Activated CD4-positive, alpha-beta memory T cell treated with anti-CD3 and anti-CD28 coated beads for 36 hours (primary cell): ENCODE measurements at regions of chr10 and their contacts with region 1.

Region 1: DNA sequence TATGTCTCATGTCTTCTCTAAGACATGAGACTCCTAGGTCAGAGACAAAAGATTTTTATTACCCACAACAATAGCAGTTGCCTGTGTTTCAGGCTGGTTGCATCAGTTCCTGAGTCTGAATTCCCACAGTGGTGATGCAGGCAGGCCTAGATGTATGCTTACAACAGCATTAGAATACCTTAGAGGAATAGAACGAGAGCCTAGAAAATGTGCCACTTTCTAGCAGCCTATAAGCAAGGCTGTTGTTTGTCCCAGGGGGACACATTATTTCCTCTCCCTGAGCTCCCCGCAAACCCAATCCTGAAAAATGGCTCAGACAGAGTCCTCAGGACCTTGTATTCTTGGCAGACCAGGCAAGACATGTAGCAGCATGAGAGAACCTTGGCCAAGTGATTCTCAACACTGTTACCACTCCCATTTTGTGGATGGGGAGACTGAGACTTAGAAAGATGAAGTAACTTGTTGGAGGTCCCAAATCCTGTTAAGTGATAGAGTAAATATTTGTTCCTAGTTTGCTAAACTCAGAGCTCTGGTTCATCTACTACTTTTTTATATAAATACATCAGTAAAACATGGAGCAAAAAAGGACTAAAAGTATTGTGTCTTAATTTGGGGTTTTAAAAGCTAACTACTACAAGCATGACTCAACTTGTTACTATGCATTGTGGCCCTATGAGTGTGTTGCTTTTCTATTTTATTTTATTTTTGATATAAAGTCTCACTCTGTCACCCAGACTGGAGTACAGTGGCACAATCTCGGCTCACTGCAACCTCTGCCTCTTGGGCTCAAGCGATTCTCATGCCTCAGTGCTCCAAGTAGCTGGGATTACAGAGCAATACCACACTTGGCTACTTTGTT is 14.2 kb downstream of the VTI1A start:
- DNase-seq: peak; percentile 77
- H3K4me3 Mint-ChIP-seq: no peak overlapping the region
- H3K27ac Mint-ChIP-seq: peak overlapping the region; percentile 94
- H3K4me1 Mint-ChIP-seq: peaks cover 24% of the 10 kb centered on the region
- H3K27me3 Mint-ChIP-seq: no peaks in the 10 kb centered on the region

Region 2: DNA sequence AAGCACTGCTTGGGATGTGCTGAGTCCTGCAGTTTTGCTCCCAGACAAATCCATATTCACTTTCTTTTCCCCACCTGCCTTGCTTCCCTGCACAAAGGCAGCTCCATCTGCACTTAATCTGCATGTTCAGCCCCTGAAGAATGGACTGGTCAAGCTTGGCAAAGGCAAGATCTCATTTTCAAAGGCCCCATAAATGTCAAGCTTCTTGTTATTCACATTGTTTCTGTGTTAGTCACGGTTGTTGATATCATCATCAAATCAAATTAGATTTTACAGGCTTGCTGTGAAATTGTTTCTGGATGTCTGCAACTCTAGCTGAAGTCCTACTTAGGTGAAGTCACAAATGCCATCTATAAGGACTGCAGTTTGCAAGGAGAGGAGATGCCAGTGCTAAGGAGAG is 368.8 kb before region 1 on chr10:
- CTCF ChIA-PET with region 1: no interaction called
- POLR2A ChIA-PET with region 1: no interaction called
- intact Hi-C with region 1: no loop called
- DNase-seq: no peak
- H3K4me3 Mint-ChIP-seq: no peak overlapping the region
- H3K27ac Mint-ChIP-seq: no peak overlapping the region
- H3K4me1 Mint-ChIP-seq: no peaks in the 10 kb centered on the region
- H3K27me3 Mint-ChIP-seq: peaks cover 14% of the 10 kb centered on the region

Region 3: DNA sequence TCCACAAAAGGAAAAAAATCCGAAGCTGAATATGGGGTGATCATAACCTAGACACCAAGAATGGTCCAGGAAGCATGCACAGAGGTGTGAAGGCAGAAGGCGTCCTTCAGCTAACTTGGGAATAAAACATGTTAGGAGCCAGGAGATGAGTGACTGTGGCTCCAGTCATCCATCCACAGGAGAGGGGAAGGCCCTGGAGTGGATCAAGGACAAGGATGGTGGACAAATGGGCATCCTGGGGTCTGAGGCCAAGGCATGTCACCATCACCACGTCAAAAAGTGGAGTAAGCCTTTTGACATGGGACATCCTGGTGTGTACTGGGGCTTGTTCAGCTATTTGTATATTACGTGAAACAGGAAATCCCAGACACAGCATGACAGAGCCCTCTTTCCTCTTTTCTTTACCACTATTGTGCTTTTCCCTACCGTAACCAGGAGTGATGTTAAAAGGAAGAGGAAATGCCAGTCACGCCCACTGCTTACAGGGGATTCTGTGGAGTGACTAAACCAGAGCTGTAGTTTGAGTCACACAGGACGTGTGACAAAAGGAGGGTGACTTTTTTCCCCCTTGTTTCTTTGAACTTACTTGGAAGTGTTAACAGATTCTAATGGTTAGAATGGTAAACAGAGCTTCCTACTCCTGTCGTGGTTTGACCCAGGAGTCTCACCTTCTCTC is 72.0 kb before region 1 on chr10:
- CTCF ChIA-PET with region 1: no interaction called
- POLR2A ChIA-PET with region 1: no interaction called
- intact Hi-C with region 1: loop called (anchors 2 kb)
- DNase-seq: peak; percentile 80
- H3K4me3 Mint-ChIP-seq: peak overlapping the region; percentile 1
- H3K27ac Mint-ChIP-seq: peak overlapping the region; percentile 88
- H3K4me1 Mint-ChIP-seq: peaks cover 58% of the 10 kb centered on the region
- H3K27me3 Mint-ChIP-seq: no peaks in the 10 kb centered on the region

Region 4: GRCh38 chr10:112442063-112442462 is 19.2 kb before region 1 on chr10:
- CTCF ChIA-PET with region 1: interaction called, 10 read pairs
- POLR2A ChIA-PET with region 1: interaction called, 14 read pairs
- intact Hi-C with region 1: loop called (anchors 2 kb)
- DNase-seq: no peak
- H3K4me3 Mint-ChIP-seq: peak overlapping the region; percentile 15
- H3K27ac Mint-ChIP-seq: peak overlapping the region; percentile 72
- H3K4me1 Mint-ChIP-seq: peaks cover 40% of the 10 kb centered on the region
- H3K27me3 Mint-ChIP-seq: no peaks in the 10 kb centered on the region

Region 5: DNA sequence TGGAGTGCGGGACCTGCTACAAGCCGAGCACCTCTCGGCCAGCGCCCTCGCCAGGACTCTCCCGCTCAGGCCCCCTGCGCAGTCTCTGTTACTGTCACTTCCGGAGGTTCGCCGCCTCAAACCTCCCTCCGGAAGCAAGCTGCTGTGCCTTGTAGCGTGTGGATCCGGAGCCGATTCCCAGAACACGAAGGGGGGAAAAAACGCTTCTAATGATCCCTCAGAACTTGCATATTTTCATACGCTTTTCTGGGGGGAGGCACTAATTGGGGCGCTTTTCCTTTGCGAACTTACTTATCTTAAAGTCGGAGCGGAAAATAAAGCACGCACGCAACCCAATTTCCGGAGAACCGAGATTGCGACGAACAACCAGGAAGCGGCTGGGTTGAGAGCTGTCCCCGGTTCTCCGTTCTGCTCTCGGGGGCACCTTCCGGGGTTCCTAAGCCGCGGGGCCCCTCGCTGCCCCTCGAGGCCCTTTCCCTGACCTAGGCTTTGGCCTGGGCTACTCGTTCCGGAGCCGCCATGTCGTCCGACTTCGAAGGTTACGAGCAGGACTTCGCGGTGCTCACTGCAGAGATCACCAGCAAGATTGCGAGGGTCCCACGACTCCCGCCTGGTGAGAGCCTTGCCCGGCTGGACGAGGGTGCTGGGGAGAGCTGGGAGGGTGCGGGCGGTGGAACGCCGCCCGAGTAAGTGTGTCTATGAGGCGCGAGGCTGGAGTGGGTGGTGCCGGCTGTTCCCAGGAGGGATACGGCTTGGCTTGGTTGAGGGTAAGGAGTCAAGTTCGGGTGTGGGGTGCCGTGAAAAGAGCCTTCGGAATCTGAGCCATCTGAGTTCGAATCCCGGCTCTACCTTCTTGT is 14.2 kb before region 1 on chr10 and contains the starts of genes VTI1A and ZDHHC6:
- CTCF ChIA-PET with region 1: interaction called, 10 read pairs
- POLR2A ChIA-PET with region 1: interaction called, 14 read pairs
- intact Hi-C with region 1: loop called (anchors 2 kb)
- DNase-seq: peak; percentile 90
- H3K4me3 Mint-ChIP-seq: peak within 1 kb of the TSS; percentile 96
- H3K27ac Mint-ChIP-seq: peak within 1 kb of the TSS; percentile 91
- H3K4me1 Mint-ChIP-seq: peaks cover 51% of the 10 kb centered on the region
- H3K27me3 Mint-ChIP-seq: no peaks in the 10 kb centered on the region
- total RNA-seq, gene VTI1A: 24.3 to 24.5 TPM
- total RNA-seq, gene ZDHHC6: 40.1 to 40.7 TPM

Region 6: DNA sequence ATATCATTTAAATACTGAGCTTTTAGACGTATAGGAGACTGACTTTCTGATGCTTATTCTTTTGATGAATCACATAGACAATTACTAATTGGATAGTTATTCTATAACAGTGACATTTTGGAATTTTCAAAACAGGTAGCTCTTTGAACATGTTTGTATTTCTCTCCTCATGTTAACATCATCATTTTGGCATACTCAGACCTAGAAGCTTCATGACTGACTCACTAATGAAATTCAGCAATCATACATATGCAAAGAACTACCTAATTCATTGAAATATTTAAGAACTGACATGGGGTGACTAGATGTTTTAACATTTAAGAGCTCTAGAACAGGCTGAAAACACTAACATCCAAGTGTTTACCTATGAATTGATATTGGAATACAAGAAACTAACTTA is 178.0 kb after region 1 on chr10:
- CTCF ChIA-PET with region 1: no interaction called
- POLR2A ChIA-PET with region 1: no interaction called
- intact Hi-C with region 1: no loop called
- DNase-seq: no peak
- H3K4me3 Mint-ChIP-seq: no peak overlapping the region
- H3K27ac Mint-ChIP-seq: no peak overlapping the region
- H3K4me1 Mint-ChIP-seq: no peaks in the 10 kb centered on the region
- H3K27me3 Mint-ChIP-seq: no peaks in the 10 kb centered on the region

Region 7: GRCh38 chr10:112711366-112711765 is 250.1 kb after region 1 on chr10:
- CTCF ChIA-PET with region 1: no interaction called
- POLR2A ChIA-PET with region 1: no interaction called
- intact Hi-C with region 1: no loop called
- DNase-seq: no peak
- H3K4me3 Mint-ChIP-seq: no peak overlapping the region
- H3K27ac Mint-ChIP-seq: no peak overlapping the region
- H3K4me1 Mint-ChIP-seq: no peaks in the 10 kb centered on the region
- H3K27me3 Mint-ChIP-seq: no peaks in the 10 kb centered on the region